ENCODE measurements at regions of chr19 and their contacts with region 1.

Region 1: GRCh38 chr19:7680606-7681339 is at the start of gene TRAPPC5:
- DNase-seq: peak; percentile 90 to 94 (median 92)
- ATAC-seq: peak; percentile 97
- H3K4me3 ChIP-seq: peak within 1 kb of the TSS; percentile 100
- H3K4me1 ChIP-seq: peaks cover 10% of the 10 kb centered on the region
- CTCF ChIP-seq: peak; percentile 95
- total RNA-seq, gene TRAPPC5: 72.5 to 97.0 (median 91.1) TPM

Region 2: DNA sequence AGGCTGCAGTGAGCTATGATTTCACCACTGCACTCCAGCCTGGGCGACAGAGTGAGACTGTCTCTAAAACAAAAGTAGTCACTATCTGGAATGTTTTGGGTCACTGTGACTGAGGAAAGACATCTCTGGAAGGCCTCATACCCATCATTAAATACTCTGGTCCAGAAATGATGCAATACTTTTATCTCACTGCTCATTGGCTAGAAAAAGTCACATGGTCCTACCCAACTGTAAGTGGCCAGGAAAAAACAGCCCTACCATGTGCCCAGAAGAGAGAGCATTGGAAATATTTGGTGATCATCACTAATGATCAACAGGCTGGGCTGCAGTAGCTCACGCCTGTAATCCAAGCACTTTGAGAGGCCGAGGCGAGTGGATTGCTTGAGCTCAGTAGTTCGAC is 115.4 kb before region 1 on chr19:
- intact Hi-C with region 1: loop called in 1 of 2 experiments (anchors 5 kb)
- DNase-seq: no peak
- ATAC-seq: no peak
- H3K4me3 ChIP-seq: no peak overlapping the region
- H3K4me1 ChIP-seq: no peaks in the 10 kb centered on the region
- CTCF ChIP-seq: no peak

Region 3: GRCh38 chr19:7799640-7800355 is 119.0 kb after region 1 on chr19:
- intact Hi-C with region 1: loop called in 1 of 2 experiments (anchors 10 kb)
- DNase-seq: peak in 2 of 3 donors; percentile 52 to 85
- ATAC-seq: peak; percentile 81
- H3K4me3 ChIP-seq: no peak overlapping the region
- H3K4me1 ChIP-seq: no peaks in the 10 kb centered on the region
- CTCF ChIP-seq: peak; percentile 34

Measured in mucosa of descending colon (tissue), 3 donors.